Thyroid gland (tissue), 4 donors: ENCODE measurements at regions of chr7 and their contacts with region 1.

Region 1: DNA sequence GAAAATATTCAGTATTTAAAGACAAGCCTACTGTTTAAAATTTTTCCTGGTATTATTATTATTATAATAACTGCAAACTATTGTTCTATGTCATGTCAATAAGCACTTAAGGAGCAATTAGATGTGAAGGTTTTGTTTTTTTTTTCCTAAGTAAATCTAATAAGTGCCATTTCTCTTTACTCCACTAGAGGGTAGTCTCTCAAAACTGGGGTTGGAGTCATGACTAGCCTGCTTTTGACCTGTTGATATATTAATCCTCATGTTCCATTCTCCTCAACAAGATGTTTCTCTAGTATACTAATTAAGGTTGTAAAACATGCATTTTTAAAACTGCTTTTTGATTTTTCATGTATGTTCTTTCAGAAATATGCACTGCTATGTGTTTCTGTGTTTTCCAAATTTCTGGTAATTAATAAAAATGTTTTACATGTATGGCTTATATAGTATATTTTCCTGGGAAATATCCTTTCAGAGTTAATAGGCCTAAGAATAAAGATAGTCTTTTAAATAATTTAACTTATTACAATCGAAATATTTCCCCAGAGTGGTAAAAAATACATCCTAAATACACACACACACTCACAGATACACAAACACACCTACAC is 1.0 kb upstream of the LRRN3 start:
- DNase-seq: no peak
- H3K4me3 ChIP-seq: no peak overlapping the region
- H3K27ac ChIP-seq: no peak overlapping the region
- H3K4me1 ChIP-seq: peaks cover 13 to 14% of the 10 kb centered on the region in 2 donors
- H3K27me3 ChIP-seq: no peaks in the 10 kb centered on the region
- CTCF ChIP-seq: peak; percentile 57 to 81 (median 59)
- POLR2A ChIP-seq: no peak

Region 2: DNA sequence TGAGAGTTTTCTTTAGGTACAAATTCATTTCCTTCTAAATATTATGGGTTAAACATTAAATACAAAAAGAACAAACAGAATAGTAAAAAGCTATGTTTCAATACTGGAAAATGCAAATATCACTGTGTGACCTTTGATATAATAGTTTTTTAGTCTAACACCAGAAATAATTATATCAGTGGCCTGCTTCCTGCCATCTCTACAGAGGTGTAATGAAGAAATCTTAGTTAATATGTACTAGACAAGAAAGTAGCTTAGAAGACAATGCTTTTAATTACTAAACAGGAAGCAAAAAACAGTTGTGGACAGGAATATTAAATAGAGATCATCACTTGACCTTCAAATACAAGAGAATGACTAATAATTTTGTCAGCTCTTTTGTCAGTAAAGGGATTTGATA is 46.4 kb before region 1 on chr7:
- intact Hi-C with region 1: no loop called
- DNase-seq: no peak
- H3K4me3 ChIP-seq: no peak overlapping the region
- H3K27ac ChIP-seq: no peak overlapping the region
- H3K4me1 ChIP-seq: peaks cover 8 to 9% of the 10 kb centered on the region in 2 donors
- H3K27me3 ChIP-seq: no peaks in the 10 kb centered on the region
- CTCF ChIP-seq: no peak
- POLR2A ChIP-seq: no peak

Region 3: GRCh38 chr7:111198255-111198654 is 108.3 kb after region 1 on chr7:
- intact Hi-C with region 1: no loop called
- DNase-seq: no peak
- H3K4me3 ChIP-seq: no peak overlapping the region
- H3K27ac ChIP-seq: no peak overlapping the region
- H3K4me1 ChIP-seq: peaks cover 4 to 10% of the 10 kb centered on the region in 2 donors
- H3K27me3 ChIP-seq: no peaks in the 10 kb centered on the region
- CTCF ChIP-seq: no peak
- POLR2A ChIP-seq: no peak

Region 4: GRCh38 chr7:111486472-111487142 is 396.7 kb after region 1 on chr7:
- intact Hi-C with region 1: loop called (anchors 5 kb)
- DNase-seq: peak; percentile 8 to 18
- H3K4me3 ChIP-seq: no peak overlapping the region
- H3K27ac ChIP-seq: no peak overlapping the region
- H3K4me1 ChIP-seq: no peaks in the 10 kb centered on the region
- H3K27me3 ChIP-seq: no peaks in the 10 kb centered on the region
- CTCF ChIP-seq: peak; percentile 32 to 86 (median 66)
- POLR2A ChIP-seq: no peak